ENCODE measurements at regions of chr2 and their contacts with region 1.

Region 1: DNA sequence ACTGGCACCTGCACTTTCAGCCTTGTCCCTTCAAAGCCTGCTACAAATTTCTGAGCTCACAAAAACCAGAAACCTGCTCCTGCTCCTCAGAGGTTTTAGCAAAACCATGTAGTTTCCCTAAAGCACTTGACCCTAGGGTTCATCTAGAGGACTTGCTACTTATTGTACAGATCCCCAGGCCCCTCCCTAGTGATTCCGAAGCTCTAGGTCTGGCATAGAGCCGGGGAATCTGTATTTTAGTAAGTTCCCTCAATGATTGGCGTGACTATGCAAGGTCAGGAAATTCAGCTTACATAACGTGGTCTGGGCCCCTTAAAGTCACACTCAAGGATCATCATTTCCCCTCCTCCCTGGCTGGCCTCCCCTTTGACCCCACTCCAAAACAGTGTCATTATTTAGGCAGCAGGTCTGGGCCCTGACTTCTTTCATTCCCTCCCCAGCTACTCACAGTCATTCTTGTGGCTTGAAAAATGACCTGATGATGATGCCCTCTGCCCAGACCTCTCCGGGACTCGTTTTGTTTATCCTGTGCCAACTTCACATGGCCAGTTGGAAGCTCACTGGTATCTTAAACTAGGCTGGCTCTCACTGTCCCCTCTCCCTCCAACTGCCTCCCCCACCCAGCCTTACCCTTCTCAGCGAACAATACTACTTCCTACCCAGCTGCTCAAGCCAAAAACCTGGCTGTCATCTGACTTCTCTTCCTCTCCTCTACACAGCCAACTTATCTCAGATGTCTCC is 36.0 kb downstream of the WDFY1 start:
- DNase-seq: peak in 1 of 2 donors; percentile 67
- H3K4me3 ChIP-seq: no peak overlapping the region
- CTCF ChIP-seq: no peak
- POLR2A ChIP-seq: no peak

Region 2: GRCh38 chr2:223222403-223222802 is 686.8 kb before region 1 on chr2:
- intact Hi-C with region 1: no loop called
- DNase-seq: no peak
- H3K4me3 ChIP-seq: no peak overlapping the region
- CTCF ChIP-seq: no peak
- POLR2A ChIP-seq: no peak

Region 3: GRCh38 chr2:224310943-224311625 is 401.9 kb after region 1 on chr2:
- intact Hi-C with region 1: loop called (anchors 5 kb)
- DNase-seq: no peak
- H3K4me3 ChIP-seq: no peak overlapping the region
- CTCF ChIP-seq: no peak
- POLR2A ChIP-seq: no peak

Measured in lower leg skin (tissue), 4 donors.